Breast epithelium (tissue), 4 donors: ENCODE measurements at regions of chr12 and their contacts with region 1.

Region 1: GRCh38 chr12:64551698-64552097 is 58.6 kb upstream of the RASSF3 start:
- DNase-seq: no peak
- H3K4me3 ChIP-seq: no peak overlapping the region
- H3K27ac ChIP-seq: peak overlapping the region in 1 of 2 donors; percentile 34
- H3K4me1 ChIP-seq: no peaks in the 10 kb centered on the region
- H3K27me3 ChIP-seq: no peaks in the 10 kb centered on the region
- CTCF ChIP-seq: no peak
- POLR2A ChIP-seq: no peak

Region 2: GRCh38 chr12:64318605-64319004 is 233.1 kb before region 1 on chr12:
- intact Hi-C with region 1: no loop called
- DNase-seq: no peak
- H3K4me3 ChIP-seq: no peak overlapping the region
- H3K27ac ChIP-seq: no peak overlapping the region
- H3K4me1 ChIP-seq: no peaks in the 10 kb centered on the region
- H3K27me3 ChIP-seq: no peaks in the 10 kb centered on the region
- CTCF ChIP-seq: no peak
- POLR2A ChIP-seq: no peak

Region 3: GRCh38 chr12:64494998-64495729 is 56.5 kb before region 1 on chr12:
- intact Hi-C with region 1: no loop called
- DNase-seq: no peak
- H3K4me3 ChIP-seq: no peak overlapping the region
- H3K27ac ChIP-seq: no peak overlapping the region
- H3K4me1 ChIP-seq: no peaks in the 10 kb centered on the region
- H3K27me3 ChIP-seq: no peaks in the 10 kb centered on the region
- CTCF ChIP-seq: no peak
- POLR2A ChIP-seq: no peak

Region 4: GRCh38 chr12:64610149-64610678 is 58.5 kb after region 1 on chr12 and contains the start of gene RASSF3:
- intact Hi-C with region 1: loop called (anchors 10 kb)
- DNase-seq: peak in 1 of 2 donors; percentile 47
- H3K4me3 ChIP-seq: peak within 1 kb of the TSS; percentile 90 to 97 (median 91)
- H3K27ac ChIP-seq: peak within 1 kb of the TSS; percentile 89 to 94
- H3K4me1 ChIP-seq: no peaks in the 10 kb centered on the region
- H3K27me3 ChIP-seq: no peaks in the 10 kb centered on the region
- CTCF ChIP-seq: no peak
- POLR2A ChIP-seq: no peak
- total RNA-seq, gene RASSF3: 23.4 to 28.4 (median 24.6) TPM

Region 5: DNA sequence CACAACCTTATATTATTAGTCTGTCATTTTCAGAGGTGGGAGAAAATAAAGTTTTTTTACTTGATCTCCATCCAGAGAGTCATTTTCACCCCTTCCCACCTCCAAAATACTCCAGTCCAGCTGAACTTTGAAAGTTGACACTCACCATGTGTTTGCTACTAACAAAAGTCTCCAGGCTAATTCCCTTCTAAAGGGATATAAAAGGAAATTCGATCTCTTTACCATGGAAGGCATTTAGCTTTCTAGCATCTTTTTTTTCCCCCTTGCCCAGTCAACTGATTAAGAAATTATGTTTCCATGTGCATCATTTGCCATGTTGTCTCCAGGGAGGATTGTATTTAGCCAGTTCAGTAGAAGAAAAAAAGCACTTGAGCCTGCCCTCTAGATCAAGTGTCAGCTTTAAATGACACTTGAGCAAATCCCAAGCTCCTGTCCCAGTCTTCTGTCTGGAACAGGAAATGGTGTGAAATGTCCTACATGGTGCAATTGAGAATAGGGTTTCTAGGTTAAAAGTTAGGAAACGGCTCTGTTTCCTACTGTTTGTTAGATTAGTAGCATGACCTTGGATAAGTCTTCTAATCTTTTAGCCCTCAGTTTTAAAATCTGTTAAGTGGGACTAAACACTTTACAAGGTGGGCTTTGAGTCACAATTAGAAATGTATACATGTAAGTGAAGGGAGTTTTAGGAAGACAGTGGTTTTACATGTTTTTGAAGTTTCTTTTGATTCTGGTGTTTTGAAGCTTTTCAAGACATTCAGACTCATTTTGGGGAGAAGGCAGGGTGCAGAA is 140.3 kb after region 1 on chr12:
- intact Hi-C with region 1: loop called (anchors 5 kb)
- DNase-seq: no peak
- H3K4me3 ChIP-seq: no peak overlapping the region
- H3K27ac ChIP-seq: no peak overlapping the region
- H3K4me1 ChIP-seq: no peaks in the 10 kb centered on the region
- H3K27me3 ChIP-seq: no peaks in the 10 kb centered on the region
- CTCF ChIP-seq: no peak
- POLR2A ChIP-seq: no peak